ENCODE measurements at regions of chr5 and their contacts with region 1.

Region 1: GRCh38 chr5:67182301-67182790 is 14.3 kb downstream of the CD180 start:
- DNase-seq: no peak
- H3K4me3 Mint-ChIP-seq: no peak overlapping the region
- H3K27ac Mint-ChIP-seq: no peak overlapping the region
- H3K4me1 Mint-ChIP-seq: peaks cover 43% of the 10 kb centered on the region
- H3K27me3 Mint-ChIP-seq: no peaks in the 10 kb centered on the region

Region 2: DNA sequence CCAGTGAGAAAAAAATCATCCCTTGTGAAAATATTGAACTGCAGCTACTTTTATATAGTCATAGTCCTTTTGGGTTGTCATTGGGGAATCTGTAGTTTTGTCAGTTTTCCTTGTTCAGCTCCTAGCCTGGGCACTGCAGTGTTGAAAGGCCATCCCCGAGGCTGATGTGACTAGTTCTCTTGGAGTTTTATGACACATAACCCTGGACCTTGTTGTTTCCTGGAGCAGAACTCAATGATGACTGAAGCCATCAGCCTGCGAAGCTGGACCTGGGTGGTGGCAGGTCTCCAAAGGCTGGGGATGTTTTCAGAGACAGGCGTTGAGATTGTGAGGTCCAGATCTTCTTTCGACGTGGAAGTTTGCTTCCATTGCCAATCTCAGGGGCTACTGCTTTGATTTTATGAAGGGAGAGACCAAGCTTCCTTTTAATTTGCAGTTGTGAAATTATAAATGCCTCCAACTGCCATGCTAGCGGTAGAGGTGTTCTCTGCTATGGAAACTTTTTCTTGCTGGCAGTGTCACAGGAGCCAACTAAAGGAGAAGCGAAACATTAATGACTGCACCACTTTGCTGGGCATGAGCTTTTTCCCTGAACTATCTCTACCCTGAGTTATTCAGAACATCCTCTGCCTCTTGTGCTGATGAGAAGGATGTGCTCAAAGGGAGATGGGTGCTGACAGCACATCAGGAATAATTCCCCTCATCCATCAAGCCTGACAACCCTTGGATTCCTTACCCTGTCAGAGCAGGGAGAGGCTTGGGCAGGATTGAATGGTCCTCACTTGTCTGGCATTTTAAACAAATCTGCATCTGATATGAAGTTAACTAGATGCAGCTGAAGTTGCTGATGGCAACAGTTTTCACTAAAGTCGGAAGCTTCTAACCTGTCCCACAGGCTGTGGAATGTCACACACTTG is 376.6 kb before region 1 on chr5:
- CTCF ChIA-PET with region 1: no interaction called
- intact Hi-C with region 1: no loop called
- DNase-seq: no peak
- H3K4me3 Mint-ChIP-seq: no peak overlapping the region
- H3K27ac Mint-ChIP-seq: no peak overlapping the region
- H3K4me1 Mint-ChIP-seq: no peaks in the 10 kb centered on the region
- H3K27me3 Mint-ChIP-seq: peaks cover 17% of the 10 kb centered on the region

Region 3: GRCh38 chr5:67165526-67166459 is 16.6 kb before region 1 on chr5:
- CTCF ChIA-PET with region 1: interaction called, 17 read pairs
- intact Hi-C with region 1: no loop called
- DNase-seq: peak; percentile 91
- H3K4me3 Mint-ChIP-seq: peak overlapping the region; percentile 76
- H3K27ac Mint-ChIP-seq: peak overlapping the region; percentile 88
- H3K4me1 Mint-ChIP-seq: peaks cover 57% of the 10 kb centered on the region
- H3K27me3 Mint-ChIP-seq: no peaks in the 10 kb centered on the region

Region 4: DNA sequence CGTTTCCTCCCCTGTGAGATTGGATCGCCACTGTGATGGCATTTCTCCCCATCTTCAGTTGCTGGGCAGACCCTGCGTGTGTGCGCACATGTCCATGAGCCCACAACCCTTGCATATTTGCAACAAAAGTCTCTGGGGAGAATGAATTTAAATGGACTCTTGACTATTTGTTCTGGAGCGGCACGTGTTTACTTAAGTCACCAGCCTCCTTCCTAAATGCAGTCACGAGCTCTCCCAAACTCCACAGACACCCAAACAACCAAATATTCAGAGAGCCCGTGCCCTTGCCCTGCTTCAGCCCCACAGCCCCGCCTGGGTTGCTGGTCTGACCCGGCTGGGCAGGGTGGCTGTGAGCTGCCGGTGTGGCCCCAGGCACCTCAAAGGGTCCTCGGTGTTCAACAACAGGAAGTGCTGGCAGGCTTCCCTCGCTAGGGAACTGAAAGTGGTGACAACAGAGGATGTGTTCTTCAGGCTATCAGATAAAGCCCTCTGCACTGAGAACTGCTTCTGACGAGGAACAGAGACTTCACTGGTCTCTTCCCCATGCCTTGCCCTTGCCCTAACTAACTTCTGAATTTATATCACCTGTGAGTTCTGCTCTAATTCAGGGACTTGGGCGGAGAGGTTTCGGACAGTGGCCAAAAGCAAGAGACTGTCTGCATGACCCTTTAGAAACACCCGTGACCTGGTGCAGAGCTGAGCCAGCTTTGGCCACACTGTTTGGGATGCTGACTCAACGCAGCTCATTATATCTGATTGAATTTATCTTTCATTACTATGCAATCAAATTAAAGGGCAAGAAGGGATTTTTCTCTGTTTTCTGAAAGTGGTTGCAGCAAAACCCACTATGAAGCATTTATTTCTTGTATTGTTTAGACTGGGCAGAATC is 33.5 kb after region 1 on chr5:
- CTCF ChIA-PET with region 1: no interaction called
- intact Hi-C with region 1: no loop called
- DNase-seq: peak; percentile 82
- H3K4me3 Mint-ChIP-seq: peak overlapping the region; percentile 54
- H3K27ac Mint-ChIP-seq: peak overlapping the region; percentile 68
- H3K4me1 Mint-ChIP-seq: peaks cover 51% of the 10 kb centered on the region
- H3K27me3 Mint-ChIP-seq: no peaks in the 10 kb centered on the region

Region 5: DNA sequence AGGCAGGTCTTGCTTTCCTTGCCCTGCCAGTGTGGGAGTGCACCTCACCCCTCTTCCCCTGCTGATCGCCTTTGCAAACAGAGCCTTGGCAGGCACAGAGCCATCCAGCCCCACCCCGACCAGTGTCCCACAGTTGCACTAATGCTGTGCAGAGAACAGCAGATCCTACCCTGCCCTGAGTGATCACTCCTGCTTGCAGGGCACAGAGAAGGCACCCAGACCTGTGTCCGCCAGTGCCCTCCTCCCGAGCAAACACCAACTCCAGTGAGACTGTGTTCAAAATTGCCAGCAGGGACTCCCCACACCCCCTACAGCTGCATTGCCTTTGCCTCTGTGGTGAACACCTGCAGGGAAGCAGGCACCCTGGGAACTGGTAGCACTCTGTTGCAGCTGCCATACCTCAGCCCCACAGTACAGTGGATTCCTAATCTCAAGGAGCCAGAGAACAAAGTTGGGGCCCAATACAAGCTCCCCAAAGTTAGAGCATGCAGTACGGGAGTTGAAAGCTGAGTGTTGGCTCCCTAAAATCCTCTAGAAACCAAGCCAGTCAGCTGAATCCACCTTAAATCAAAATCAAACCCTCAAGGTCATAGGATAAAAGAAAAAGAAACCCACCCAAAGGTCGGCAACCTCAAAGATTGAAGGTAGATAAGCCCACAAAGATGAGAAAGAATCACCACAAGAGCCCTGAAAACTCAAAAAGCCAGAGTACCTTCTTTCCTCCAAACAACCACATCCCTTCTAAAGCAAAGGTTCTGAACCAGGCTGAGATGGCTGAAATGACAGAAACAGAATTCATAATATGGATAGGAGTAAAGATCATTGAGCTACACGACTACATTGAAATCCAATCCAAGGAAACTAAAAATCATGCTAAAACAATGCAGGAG is 940.3 kb after region 1 on chr5:
- CTCF ChIA-PET with region 1: no interaction called
- intact Hi-C with region 1: no loop called
- DNase-seq: peak; percentile 14
- H3K4me3 Mint-ChIP-seq: no peak overlapping the region
- H3K27ac Mint-ChIP-seq: no peak overlapping the region
- H3K4me1 Mint-ChIP-seq: peaks cover 28% of the 10 kb centered on the region
- H3K27me3 Mint-ChIP-seq: no peaks in the 10 kb centered on the region